ENCODE measurements at regions of chrX and their contacts with region 1.

Region 1: DNA sequence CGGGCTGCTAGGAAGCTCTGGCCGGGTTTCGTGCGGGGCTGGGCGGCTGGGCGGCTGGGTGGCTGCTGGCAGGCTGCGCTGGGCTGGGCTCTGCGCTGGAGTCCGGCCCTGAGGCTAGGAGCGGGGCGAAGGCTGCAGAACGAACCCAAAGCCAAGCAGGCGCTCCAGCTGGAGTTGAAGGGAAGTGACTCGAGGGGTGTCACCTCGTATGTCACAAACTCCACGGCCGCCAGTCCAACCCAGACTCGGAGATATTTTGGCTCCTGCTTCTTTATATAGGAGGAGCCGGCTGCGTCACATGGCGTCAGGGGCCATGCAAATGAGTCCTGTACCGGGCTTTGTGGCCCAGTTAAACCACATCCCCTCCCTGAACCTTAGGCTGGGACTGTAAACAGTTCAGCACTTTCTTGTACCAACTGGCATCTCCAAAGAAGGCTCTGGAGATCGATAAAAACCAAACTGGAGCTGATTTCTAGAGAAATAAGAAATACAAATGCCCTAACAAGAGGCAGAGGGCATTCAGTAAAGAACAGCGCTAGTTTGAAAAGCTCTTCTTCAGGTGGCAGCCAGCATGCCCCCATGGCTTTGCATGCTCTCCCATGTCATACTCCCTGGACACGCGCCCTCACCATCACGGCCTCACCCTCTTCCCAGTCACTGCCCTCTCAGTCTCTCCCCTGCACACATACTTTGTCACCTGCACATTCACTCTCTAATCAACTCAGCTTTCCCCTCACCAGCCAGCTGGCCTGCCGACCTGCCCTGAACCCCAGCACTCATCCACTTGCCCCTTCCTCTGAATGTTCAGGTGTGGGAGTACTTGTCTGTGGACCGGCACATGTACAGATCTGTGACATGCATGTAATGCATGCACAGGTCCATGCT is 58.5 kb downstream of the TSC22D3 start:
- DNase-seq: peak; percentile 86 to 93
- ATAC-seq: peak; percentile 41 to 53
- H3K4me3 ChIP-seq: peak overlapping the region; percentile 75 to 84 (median 78)
- H3K27ac ChIP-seq: peak overlapping the region; percentile 87 to 96 (median 94)
- H3K4me1 ChIP-seq: peaks cover 39 to 42% of the 10 kb centered on the region in 2 donors
- H3K27me3 ChIP-seq: no peaks in the 10 kb centered on the region
- CTCF ChIP-seq: peak in 2 of 5 experiments; percentile 15
- POLR2A ChIP-seq: peak; percentile 98 to 99

Region 2: DNA sequence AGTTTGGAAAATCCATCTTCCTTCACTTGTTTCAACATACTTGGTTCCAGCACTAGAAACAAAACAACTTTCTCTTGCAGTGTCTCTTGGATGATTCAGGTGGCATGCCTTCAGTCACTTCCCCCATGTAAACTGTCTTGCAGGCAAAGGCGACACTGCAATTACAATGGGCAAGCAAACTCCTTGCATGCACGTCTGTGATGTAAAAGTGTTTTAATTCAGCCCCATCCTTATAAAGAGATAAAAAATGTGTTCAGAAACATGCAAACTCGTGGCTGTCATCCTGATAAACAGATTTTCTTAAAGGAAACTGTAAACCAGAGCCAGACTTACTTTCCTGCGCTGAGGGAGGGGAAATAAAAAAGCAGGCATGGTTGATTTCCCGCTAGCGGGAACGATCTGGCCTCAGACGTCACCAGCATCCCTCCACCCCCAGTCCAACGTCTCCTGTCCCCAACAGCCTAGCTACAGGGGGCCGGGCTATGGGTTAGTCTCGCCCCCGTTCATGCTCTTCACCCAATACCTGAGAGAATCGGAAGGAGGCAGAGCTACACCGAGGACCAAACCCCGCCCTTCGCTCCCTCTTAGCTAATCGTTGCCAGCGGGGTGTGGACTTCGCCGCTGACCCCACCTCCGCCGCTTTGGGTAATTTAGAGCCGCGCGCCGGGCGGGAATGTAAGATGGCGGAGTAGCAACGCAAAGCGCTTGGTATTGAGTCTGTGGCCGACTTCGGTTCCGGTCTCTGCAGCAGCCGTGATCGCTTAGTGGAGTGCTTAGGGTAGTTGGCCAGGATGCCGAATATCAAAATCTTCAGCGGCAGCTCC is 89.0 kb before region 1 on chrX and contains the start of gene PRPS1:
- in situ Hi-C with region 1: no loop called
- intact Hi-C with region 1: no loop called
- DNase-seq: peak; percentile 81 to 87
- ATAC-seq: peak; percentile 94 to 98
- H3K4me3 ChIP-seq: peak within 1 kb of the TSS; percentile 57 to 76 (median 71)
- H3K27ac ChIP-seq: peak within 1 kb of the TSS; percentile 73 to 90 (median 84)
- H3K4me1 ChIP-seq: peaks cover 0 to 10% of the 10 kb centered on the region in 2 donors
- H3K27me3 ChIP-seq: no peaks in the 10 kb centered on the region
- CTCF ChIP-seq: no peak
- POLR2A ChIP-seq: peak; percentile 72 to 85
- total RNA-seq, gene PRPS1: 19.6 to 46.0 (median 30.9) TPM

Region 3: DNA sequence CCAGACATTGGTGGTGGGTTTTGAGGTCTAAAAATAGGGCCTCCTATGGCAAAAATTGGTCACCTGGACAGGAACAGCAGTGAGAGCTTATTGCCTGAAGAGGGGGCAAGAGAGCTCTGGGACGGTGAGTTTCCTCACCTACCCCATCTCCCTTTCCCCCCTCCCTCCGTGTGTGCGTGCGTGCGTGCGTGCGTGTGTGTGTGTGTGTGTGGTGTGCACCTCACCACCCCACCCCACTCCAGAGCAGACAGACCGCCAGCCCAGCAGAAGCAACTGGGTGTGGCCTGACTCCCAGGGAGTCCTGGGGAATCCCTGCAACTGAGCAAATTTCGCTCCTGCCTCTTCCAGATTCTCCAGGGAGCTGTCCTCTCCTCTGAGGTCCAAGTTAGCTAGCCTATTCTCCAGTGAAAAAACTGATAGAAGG is 44.1 kb before region 1 on chrX:
- in situ Hi-C with region 1: loop called in 2 of 4 experiments (anchors 5 kb)
- intact Hi-C with region 1: loop called (anchors 1 kb)
- DNase-seq: peak; percentile 63 to 85
- ATAC-seq: peak; percentile 13 to 28
- H3K4me3 ChIP-seq: peak overlapping the region in 2 of 4 donors; percentile 20 to 28
- H3K27ac ChIP-seq: peak overlapping the region; percentile 89 to 94 (median 92)
- H3K4me1 ChIP-seq: peaks cover 16 to 17% of the 10 kb centered on the region in 2 donors
- H3K27me3 ChIP-seq: no peaks in the 10 kb centered on the region
- CTCF ChIP-seq: peak; percentile 69 to 81 (median 78)
- POLR2A ChIP-seq: peak; percentile 31 to 48

Region 4: GRCh38 chrX:107741404-107741790 is 24.3 kb after region 1 on chrX:
- in situ Hi-C with region 1: no loop called
- intact Hi-C with region 1: loop called (anchors 2 kb)
- DNase-seq: no peak
- ATAC-seq: no peak
- H3K4me3 ChIP-seq: no peak overlapping the region
- H3K27ac ChIP-seq: peak overlapping the region; percentile 87 to 96 (median 94)
- H3K4me1 ChIP-seq: peaks cover 80 to 85% of the 10 kb centered on the region in 2 donors
- H3K27me3 ChIP-seq: no peaks in the 10 kb centered on the region
- CTCF ChIP-seq: no peak
- POLR2A ChIP-seq: no peak